Activated CD4-positive, alpha-beta memory T cell treated with anti-CD3 and anti-CD28 coated beads, Interleukin-2, amount 10 ng/mL, durations not matched to agents 7 days and 5 days (primary cell): ENCODE measurements at regions of chr11 and their contacts with region 1.

Region 1: DNA sequence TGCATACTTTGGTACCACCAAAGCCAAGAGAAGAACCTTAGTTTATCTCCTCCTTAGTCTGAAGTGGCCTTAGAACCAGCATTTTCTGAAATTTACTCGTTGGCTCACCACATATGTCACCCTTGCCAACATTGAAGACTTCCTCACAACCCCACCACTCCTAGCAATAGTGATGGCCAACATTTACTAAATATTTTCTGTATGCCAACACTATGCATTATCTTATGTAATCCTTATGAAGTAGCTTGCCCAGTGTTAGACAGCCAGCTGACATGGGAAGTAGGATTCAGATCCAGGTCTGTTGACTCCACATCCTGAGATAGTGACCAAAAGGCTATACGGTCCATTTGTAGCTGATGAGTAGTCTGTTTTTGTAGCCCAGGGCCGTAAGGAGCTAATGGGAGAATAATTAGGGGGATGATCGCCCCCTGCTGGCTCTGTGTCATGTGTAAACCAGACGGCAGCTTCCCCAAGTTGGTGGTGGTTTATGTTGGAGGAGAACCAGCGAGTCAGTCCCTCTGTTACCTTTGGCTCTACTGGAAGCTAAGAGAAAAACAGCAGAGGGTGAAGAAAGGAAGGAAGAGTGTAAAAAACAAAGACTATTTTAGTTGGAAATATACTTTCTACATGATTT is 120.5 kb upstream of the RASSF10 start:
- DNase-seq: peak; percentile 71
- H3K4me3 Mint-ChIP-seq: no peak overlapping the region
- H3K27ac Mint-ChIP-seq: no peak overlapping the region
- H3K4me1 Mint-ChIP-seq: no peaks in the 10 kb centered on the region
- H3K27me3 Mint-ChIP-seq: no peaks in the 10 kb centered on the region

Region 2: GRCh38 chr11:12599408-12600143 is 289.1 kb before region 1 on chr11:
- CTCF ChIA-PET with region 1: interaction called, 42 read pairs
- POLR2A ChIA-PET with region 1: no interaction called
- DNase-seq: peak; percentile 50
- H3K4me3 Mint-ChIP-seq: no peak overlapping the region
- H3K27ac Mint-ChIP-seq: no peak overlapping the region
- H3K4me1 Mint-ChIP-seq: peaks cover 11% of the 10 kb centered on the region
- H3K27me3 Mint-ChIP-seq: peaks cover 24% of the 10 kb centered on the region

Region 3: DNA sequence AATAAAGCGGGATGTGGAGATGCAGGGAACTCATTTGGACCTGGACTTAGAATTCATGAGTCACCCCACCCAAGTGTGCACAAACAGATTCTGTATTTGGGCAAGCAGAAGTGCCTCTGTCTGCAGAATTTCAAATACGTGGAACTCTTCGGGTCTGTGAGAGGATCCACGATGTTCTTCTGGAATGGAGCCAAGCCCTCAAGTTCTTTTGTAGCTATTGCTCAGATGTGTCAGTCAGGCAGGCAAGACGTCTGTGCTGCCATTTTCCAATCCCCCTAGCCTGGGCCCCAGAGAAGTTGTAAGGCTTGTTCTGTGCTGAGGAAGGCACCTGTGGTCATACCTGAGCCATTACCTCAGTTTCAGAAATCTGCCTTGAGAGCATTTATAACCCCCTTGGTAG is 12.3 kb before region 1 on chr11:
- CTCF ChIA-PET with region 1: interaction called, 14 read pairs
- POLR2A ChIA-PET with region 1: no interaction called
- DNase-seq: no peak
- H3K4me3 Mint-ChIP-seq: no peak overlapping the region
- H3K27ac Mint-ChIP-seq: no peak overlapping the region
- H3K4me1 Mint-ChIP-seq: no peaks in the 10 kb centered on the region
- H3K27me3 Mint-ChIP-seq: peaks cover 17% of the 10 kb centered on the region

Region 4: GRCh38 chr11:13174090-13174489 is 285.4 kb after region 1 on chr11:
- CTCF ChIA-PET with region 1: no interaction called
- POLR2A ChIA-PET with region 1: no interaction called
- DNase-seq: no peak
- H3K4me3 Mint-ChIP-seq: no peak overlapping the region
- H3K27ac Mint-ChIP-seq: no peak overlapping the region
- H3K4me1 Mint-ChIP-seq: no peaks in the 10 kb centered on the region
- H3K27me3 Mint-ChIP-seq: peaks cover 21% of the 10 kb centered on the region